Left ventricle myocardium inferior (tissue), 1 donor: ENCODE measurements at regions of chr2 and their contacts with region 1.

Region 1: GRCh38 chr2:178280244-178280852 is 86.0 kb downstream of the OSBPL6 start:
- DNase-seq: no peak
- H3K4me3 ChIP-seq: no peak overlapping the region
- H3K27ac ChIP-seq: no peak overlapping the region
- H3K4me1 ChIP-seq: peaks cover 5% of the 10 kb centered on the region
- H3K27me3 ChIP-seq: no peaks in the 10 kb centered on the region
- CTCF ChIP-seq: peak; percentile 85

Region 2: GRCh38 chr2:178136321-178137025 is 143.9 kb before region 1 on chr2:
- intact Hi-C with region 1: loop called (anchors 10 kb)
- DNase-seq: no peak
- H3K4me3 ChIP-seq: no peak overlapping the region
- H3K27ac ChIP-seq: no peak overlapping the region
- H3K4me1 ChIP-seq: no peaks in the 10 kb centered on the region
- H3K27me3 ChIP-seq: no peaks in the 10 kb centered on the region
- CTCF ChIP-seq: no peak

Region 3: GRCh38 chr2:178193823-178194599 is 86.3 kb before region 1 on chr2 and contains the start of gene OSBPL6:
- intact Hi-C with region 1: loop called (anchors 10 kb)
- DNase-seq: peak; percentile 87
- H3K4me3 ChIP-seq: peak within 1 kb of the TSS; percentile 96
- H3K27ac ChIP-seq: peak within 1 kb of the TSS; percentile 93
- H3K4me1 ChIP-seq: peaks cover 38% of the 10 kb centered on the region
- H3K27me3 ChIP-seq: peaks cover 19% of the 10 kb centered on the region
- CTCF ChIP-seq: peak; percentile 59
- total RNA-seq, gene OSBPL6: 6.4 TPM